ENCODE measurements at regions of chr17 and their contacts with region 1.

Region 1: GRCh38 chr17:42315402-42316156 is 27.3 kb downstream of the STAT5A start:
- DNase-seq: no peak
- H3K4me3 ChIP-seq: no peak overlapping the region
- H3K27ac ChIP-seq: no peak overlapping the region
- H3K4me1 ChIP-seq: peaks cover 6 to 33% (median 20%) of the 10 kb centered on the region in 3 donors
- H3K27me3 ChIP-seq: no peaks in the 10 kb centered on the region
- CTCF ChIP-seq: no peak

Region 2: GRCh38 chr17:42227849-42228615 is 87.5 kb before region 1 on chr17:
- intact Hi-C with region 1: no loop called
- DNase-seq: no peak
- H3K4me3 ChIP-seq: no peak overlapping the region
- H3K27ac ChIP-seq: peak overlapping the region in 1 of 2 donors; percentile 53
- H3K4me1 ChIP-seq: no peaks in the 10 kb centered on the region
- H3K27me3 ChIP-seq: no peaks in the 10 kb centered on the region
- CTCF ChIP-seq: no peak

Region 3: DNA sequence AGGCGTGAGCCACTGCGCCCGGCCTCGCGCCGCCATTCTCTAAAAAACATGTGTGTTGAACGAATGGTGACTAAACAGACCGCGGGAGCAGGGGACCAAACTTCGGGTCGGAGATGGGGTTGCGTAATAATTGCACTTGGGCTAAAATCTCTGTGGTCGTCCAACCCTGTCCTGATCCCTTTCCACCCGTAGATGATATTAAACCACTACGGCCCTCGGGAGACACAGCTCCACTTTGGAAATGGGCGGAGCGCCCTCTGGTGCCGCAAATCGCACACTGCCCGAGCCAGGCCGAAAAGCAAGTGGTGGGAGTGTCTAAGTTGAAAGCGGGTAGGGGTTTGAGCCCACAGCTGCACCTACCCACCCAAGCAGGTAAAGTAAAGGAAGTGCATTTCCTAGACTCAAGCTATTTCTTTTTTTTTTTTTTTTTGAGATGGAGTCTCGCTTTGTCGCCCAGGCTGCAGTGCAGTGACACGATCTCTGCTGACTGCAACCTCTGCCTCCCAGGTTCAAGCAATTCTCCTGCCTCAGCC is 90.5 kb after region 1 on chr17:
- intact Hi-C with region 1: loop called (anchors 5 kb)
- DNase-seq: peak; percentile 81 to 91 (median 86)
- H3K4me3 ChIP-seq: no peak overlapping the region
- H3K27ac ChIP-seq: no peak overlapping the region
- H3K4me1 ChIP-seq: peaks cover 0 to 15% (median 0%) of the 10 kb centered on the region in 3 donors
- H3K27me3 ChIP-seq: no peaks in the 10 kb centered on the region
- CTCF ChIP-seq: peak; percentile 95